Gastrocnemius medialis (tissue), 4 donors: ENCODE measurements at regions of chr3 and their contacts with region 1.

Region 1: GRCh38 chr3:105691633-105692032 is 177.2 kb downstream of the CBLB start:
- DNase-seq: no peak
- ATAC-seq: peak; percentile 56 to 72
- H3K4me3 ChIP-seq: no peak overlapping the region
- H3K27ac ChIP-seq: no peak overlapping the region
- H3K4me1 ChIP-seq: peaks cover 0 to 2% of the 10 kb centered on the region in 2 donors
- H3K27me3 ChIP-seq: no peaks in the 10 kb centered on the region
- CTCF ChIP-seq: no peak
- POLR2A ChIP-seq: no peak

Region 2: DNA sequence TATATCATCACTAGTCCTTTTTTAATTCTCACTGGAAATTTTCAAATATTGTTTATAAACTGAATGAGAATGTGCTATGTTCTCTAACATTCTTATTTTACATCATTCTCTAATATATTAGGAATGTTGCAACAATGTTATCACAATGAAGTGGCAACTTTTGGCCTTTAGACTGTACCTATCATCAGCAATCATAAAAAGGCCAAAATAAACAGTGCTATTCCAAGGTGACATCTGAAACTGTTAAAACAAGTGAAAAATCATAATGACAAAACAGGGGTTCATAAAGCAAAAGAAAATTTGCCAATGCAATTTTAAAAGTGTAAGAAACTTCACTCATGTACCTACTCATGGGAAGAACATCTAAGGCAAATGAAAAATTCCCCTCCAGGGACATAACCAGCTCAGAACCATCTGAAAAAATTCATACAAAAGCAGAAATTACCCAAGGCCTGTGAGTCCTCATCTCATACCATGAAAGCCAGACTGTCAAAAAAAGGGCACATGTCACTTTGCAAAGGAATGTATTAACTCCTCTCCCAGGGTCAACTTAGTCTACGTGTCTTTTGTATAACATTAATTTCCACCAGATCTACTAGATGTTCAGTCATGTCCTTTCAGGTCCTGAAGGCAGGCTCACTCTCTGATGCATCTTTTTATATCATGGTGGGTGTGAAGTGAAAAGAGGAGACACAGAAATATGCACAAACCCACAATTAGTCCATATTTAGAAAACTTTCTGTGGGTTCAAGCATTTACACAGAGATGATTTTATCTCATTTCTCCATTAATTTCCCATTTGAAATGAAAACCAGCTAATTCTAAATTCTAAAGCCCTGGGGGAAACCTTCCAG is 34.8 kb before region 1 on chr3:
- in situ Hi-C with region 1: no loop called
- intact Hi-C with region 1: no loop called
- DNase-seq: no peak
- ATAC-seq: no peak
- H3K4me3 ChIP-seq: no peak overlapping the region
- H3K27ac ChIP-seq: no peak overlapping the region
- H3K4me1 ChIP-seq: no peaks in the 10 kb centered on the region
- H3K27me3 ChIP-seq: no peaks in the 10 kb centered on the region
- CTCF ChIP-seq: no peak
- POLR2A ChIP-seq: no peak

Region 3: DNA sequence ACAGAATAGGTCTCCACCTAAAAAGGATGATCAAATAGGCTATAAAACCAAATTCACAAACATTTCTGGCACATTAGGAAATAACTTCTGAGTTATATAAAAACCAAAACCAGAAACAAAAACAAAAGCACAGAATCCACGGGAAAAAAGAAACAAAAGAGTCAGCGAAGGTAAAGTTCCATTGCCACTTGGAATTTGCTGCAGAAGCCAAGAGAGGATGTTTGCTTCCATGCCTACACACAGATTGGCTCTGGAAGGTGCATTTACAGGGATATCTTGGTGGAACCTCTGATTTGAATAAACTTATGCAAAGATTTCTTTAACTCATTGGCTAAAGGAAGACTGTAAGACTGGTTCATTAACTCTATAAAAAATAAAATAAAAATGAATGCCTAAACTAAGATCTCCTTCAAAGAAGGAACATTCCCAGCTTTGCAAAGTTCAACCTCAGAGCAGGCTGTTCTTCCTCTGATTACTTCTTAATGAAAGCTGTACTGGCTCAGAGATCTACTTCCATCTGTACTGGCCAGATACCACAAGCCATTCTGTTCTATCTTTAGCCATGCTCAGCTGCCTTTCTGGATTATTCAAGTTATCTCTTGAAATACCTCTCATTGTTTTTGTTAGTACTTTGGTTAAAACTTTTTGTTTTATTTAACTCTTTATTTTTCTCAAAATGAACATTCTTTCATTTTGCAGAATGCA is 1148.1 kb after region 1 on chr3:
- in situ Hi-C with region 1: no loop called
- intact Hi-C with region 1: loop called (anchors 5 kb)
- DNase-seq: no peak
- ATAC-seq: peak in 1 of 2 donors; percentile 58
- H3K4me3 ChIP-seq: peak overlapping the region in 1 of 4 donors; percentile 26
- H3K27ac ChIP-seq: no peak overlapping the region
- H3K4me1 ChIP-seq: peaks cover 0 to 12% of the 10 kb centered on the region in 2 donors
- H3K27me3 ChIP-seq: no peaks in the 10 kb centered on the region
- CTCF ChIP-seq: no peak
- POLR2A ChIP-seq: no peak